Natural killer cell (primary cell): ENCODE measurements at regions of chr16 and their contacts with region 1.

Region 1: GRCh38 chr16:75234856-75235696 is 16.3 kb downstream of the CTRB1 start:
- DNase-seq: no peak
- ATAC-seq: no peak
- H3K4me3 ChIP-seq: no peak overlapping the region
- H3K4me3 Mint-ChIP-seq: no peak overlapping the region
- H3K27ac ChIP-seq: no peak overlapping the region
- H3K27ac Mint-ChIP-seq: no peak overlapping the region
- H3K4me1 ChIP-seq: peaks cover 15% of the 10 kb centered on the region
- H3K4me1 Mint-ChIP-seq: peaks cover 0 to 18% of the 10 kb centered on the region in 2 donors
- H3K27me3 ChIP-seq: peaks cover 8% of the 10 kb centered on the region
- H3K27me3 Mint-ChIP-seq: peaks cover 3 to 16% of the 10 kb centered on the region in 2 donors
- CTCF ChIP-seq: no peak

Region 2: DNA sequence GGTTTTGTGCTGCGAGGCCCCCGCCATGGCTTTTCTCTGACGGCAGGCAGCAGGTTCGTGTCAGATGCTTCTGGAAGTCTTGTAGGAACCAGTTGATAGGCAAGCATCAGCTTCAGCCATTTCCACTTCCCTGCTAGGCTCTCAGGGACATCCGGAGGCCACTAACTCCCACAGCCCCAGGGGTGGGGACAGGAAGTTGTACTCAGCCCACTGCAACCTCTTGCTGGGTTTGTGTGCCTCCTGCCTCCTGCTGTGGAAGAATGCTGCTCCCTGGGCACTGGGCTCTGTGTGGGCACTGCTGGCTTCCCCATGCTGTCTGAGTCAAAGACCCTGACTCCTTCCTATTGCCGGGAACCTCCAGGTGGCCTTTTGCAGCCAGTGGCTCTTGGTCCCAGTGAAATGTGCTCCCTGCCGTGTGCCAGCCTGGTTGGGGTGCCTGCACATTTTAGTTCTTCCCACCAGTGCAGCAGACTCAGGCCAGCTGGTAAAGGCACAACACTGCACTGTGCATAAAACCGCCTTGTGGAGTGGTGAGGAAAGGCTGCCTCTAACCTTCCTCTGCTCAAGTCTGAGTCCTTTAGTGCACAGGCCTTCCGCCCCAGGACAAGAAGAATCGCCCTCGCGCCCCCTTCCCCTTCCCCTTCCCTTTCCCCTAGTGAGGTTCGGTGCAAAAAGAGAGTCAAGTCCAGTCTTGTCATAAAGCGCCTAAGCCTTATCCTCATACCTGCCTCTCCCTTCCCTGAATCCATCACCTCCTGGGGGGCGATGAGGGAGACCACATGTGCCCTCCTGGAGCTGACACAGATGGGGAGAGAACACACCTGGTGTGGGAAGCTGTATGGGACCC is 135.1 kb before region 1 on chr16:
- intact Hi-C with region 1: no loop called
- DNase-seq: peak in 1 of 2 donors; percentile 59
- ATAC-seq: peak; percentile 41 to 68 (median 58)
- H3K4me3 ChIP-seq: no peak overlapping the region
- H3K4me3 Mint-ChIP-seq: no peak overlapping the region
- H3K27ac ChIP-seq: no peak overlapping the region
- H3K27ac Mint-ChIP-seq: peak overlapping the region in 1 of 2 donors; percentile 31
- H3K4me1 ChIP-seq: peaks cover 34% of the 10 kb centered on the region
- H3K4me1 Mint-ChIP-seq: peaks cover 12 to 20% of the 10 kb centered on the region in 2 donors
- H3K27me3 ChIP-seq: no peaks in the 10 kb centered on the region
- H3K27me3 Mint-ChIP-seq: peaks cover 5 to 14% of the 10 kb centered on the region in 2 donors
- CTCF ChIP-seq: no peak

Region 3: DNA sequence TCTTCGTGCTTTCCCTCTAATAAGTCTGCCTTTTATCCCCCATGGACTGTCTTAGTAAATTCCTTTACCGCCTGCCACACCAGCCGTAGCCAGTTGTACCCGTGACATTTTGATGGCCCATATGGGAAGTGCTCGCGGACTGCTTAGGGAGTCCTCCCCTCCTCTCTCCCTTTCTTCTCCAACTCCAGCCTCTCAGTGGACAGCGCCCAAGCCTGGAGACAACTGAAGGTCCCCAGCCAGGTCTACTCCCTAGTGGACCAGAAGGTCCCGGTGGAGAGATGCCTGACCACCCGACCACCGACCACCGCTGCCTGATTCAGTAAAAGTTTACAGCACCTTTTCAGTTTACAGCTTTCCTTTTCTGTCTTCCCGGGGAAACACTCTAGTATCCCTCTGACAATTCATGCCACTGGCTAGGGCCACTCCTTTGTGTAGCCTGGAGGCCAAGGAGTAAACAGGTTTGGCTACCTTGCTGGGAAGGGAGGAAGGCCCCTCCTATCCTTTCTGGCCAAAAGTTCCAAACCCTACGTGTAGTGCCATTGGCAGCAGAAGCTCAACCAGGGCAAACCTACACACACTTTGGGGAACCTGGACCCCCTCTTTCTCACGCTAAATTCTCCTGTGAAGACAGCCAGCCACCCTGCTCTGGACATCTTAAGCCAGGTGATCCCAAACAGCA is 46.1 kb before region 1 on chr16:
- intact Hi-C with region 1: no loop called
- DNase-seq: no peak
- ATAC-seq: no peak
- H3K4me3 ChIP-seq: no peak overlapping the region
- H3K4me3 Mint-ChIP-seq: no peak overlapping the region
- H3K27ac ChIP-seq: no peak overlapping the region
- H3K27ac Mint-ChIP-seq: no peak overlapping the region
- H3K4me1 ChIP-seq: no peaks in the 10 kb centered on the region
- H3K4me1 Mint-ChIP-seq: no peaks in the 10 kb centered on the region
- H3K27me3 ChIP-seq: no peaks in the 10 kb centered on the region
- H3K27me3 Mint-ChIP-seq: peaks cover 11 to 25% of the 10 kb centered on the region in 2 donors
- CTCF ChIP-seq: no peak

Region 4: DNA sequence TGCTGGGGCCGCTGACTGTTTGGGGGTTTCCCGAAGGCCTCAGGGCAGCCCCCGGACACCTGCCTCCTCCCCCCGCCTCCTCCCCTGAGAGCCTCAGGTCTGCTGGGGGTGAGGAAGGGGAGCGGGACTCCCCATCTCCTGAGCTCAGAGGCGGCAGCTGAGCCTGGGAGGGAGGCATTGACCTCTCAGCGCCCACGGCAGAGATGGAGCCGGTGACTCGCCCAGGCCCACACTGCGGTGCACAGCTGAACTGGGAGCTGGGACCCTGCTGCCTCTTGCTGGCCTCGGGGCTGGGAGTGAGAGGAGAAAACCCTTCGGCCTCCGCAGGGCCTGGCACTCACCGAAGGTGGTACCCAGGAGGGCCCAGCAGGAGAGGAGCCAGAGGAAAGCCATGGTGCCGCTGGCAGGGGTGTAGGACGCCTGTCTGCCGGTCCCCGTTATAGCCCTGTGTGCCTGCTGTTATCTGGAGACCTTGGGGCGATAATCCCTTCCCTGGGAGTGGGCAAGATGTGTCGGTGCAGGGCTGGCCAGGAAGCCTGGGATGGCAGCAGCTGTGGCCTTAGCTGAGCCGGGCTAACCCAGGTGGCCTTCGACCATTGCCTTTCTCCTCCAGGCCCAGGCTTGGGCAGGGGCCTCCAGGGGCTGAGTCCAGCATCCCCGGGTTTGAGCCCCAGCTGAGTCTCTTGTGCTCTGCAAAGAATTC is 28.2 kb before region 1 on chr16 and contains the start of gene CTRB2:
- intact Hi-C with region 1: no loop called
- DNase-seq: no peak
- ATAC-seq: no peak
- H3K4me3 ChIP-seq: no peak within 1 kb of the TSS
- H3K4me3 Mint-ChIP-seq: no peak within 1 kb of the TSS
- H3K27ac ChIP-seq: no peak within 1 kb of the TSS
- H3K27ac Mint-ChIP-seq: no peak within 1 kb of the TSS
- H3K4me1 ChIP-seq: no peaks in the 10 kb centered on the region
- H3K4me1 Mint-ChIP-seq: no peaks in the 10 kb centered on the region
- H3K27me3 ChIP-seq: no peaks in the 10 kb centered on the region
- H3K27me3 Mint-ChIP-seq: peaks cover 2 to 6% of the 10 kb centered on the region in 2 donors
- CTCF ChIP-seq: no peak
- total RNA-seq, gene CTRB2: not detected

Region 5: GRCh38 chr16:75251280-75252048 is 16.4 kb after region 1 on chr16 and contains the start of gene BCAR1:
- intact Hi-C with region 1: no loop called
- DNase-seq: no peak
- ATAC-seq: peak in 1 of 3 donors; percentile 56
- H3K4me3 ChIP-seq: no peak within 1 kb of the TSS
- H3K4me3 Mint-ChIP-seq: peak within 1 kb of the TSS; percentile 58
- H3K27ac ChIP-seq: no peak within 1 kb of the TSS
- H3K27ac Mint-ChIP-seq: no peak within 1 kb of the TSS
- H3K4me1 ChIP-seq: peaks cover 14% of the 10 kb centered on the region
- H3K4me1 Mint-ChIP-seq: peaks cover 0 to 17% of the 10 kb centered on the region in 2 donors
- H3K27me3 ChIP-seq: peaks cover 27% of the 10 kb centered on the region
- H3K27me3 Mint-ChIP-seq: peaks cover 50 to 57% of the 10 kb centered on the region in 2 donors
- CTCF ChIP-seq: no peak
- total RNA-seq, gene BCAR1: not detected

Region 6: DNA sequence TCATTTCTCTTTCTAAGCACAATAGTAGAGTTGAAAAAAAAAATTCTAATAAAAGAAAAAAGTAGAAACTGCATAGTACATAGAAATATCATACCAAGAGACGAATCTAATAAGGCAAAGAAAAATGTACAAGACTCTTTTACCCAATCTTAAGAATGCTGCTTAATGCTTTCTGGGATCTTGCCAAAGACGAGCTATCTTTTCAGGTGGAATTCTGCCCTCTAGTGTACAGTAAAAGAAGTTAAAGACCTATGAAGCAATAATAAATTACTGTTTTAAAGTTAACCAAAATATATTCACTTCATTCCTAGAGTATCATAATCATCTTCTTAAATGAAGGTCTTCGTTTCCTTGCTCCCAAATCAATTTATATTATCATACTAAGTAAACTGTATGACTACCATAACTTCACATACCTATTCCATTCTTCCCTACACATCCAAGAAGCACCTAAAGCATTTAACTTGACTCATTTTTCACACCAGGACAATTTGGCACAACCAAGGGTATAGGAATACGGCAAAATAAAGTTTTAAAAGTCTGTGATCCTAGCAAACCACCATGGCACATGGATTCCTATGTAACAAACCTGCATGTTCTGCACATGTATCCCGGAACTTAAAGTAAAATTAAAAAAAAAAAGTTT is 150.6 kb after region 1 on chr16:
- intact Hi-C with region 1: loop called (anchors 1 kb)
- DNase-seq: peak in 1 of 2 donors; percentile 84
- ATAC-seq: peak in 2 of 3 donors; percentile 52 to 53
- H3K4me3 ChIP-seq: no peak overlapping the region
- H3K4me3 Mint-ChIP-seq: no peak overlapping the region
- H3K27ac ChIP-seq: no peak overlapping the region
- H3K27ac Mint-ChIP-seq: no peak overlapping the region
- H3K4me1 ChIP-seq: no peaks in the 10 kb centered on the region
- H3K4me1 Mint-ChIP-seq: peaks cover 9 to 16% of the 10 kb centered on the region in 2 donors
- H3K27me3 ChIP-seq: no peaks in the 10 kb centered on the region
- H3K27me3 Mint-ChIP-seq: peaks cover 0 to 8% of the 10 kb centered on the region in 2 donors
- CTCF ChIP-seq: peak; percentile 88

Region 7: DNA sequence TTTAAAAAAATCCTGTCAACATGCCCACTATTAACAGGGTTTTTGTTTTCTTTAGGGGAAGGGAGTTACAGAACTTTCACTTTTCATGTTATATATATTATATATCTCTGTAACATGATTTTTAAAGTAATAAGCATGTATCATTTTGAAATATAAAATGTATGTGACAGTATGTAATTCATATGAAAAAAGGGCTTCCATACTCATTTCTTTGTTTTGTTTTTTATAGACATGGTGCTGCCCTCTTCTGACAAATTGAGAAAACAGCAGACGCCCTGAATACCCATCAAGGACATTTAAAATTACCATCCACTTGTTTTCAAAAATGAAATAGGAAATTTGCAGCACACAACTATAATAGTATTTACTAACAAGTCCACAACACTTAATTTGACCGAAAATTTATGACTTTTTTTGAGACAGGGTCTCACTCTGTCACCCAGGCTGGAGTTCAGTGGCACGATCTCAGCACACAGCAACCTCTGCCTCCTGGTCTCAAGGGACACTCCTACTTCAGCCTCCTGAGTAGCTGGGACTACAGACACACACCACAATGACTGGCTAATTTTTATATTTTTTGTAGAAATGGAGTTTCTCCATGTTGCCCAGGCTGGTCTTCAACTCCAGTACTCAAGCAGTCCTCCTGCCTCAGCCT is 167.9 kb after region 1 on chr16:
- intact Hi-C with region 1: loop called (anchors 5 kb)
- DNase-seq: peak in 1 of 2 donors; percentile 59
- ATAC-seq: peak; percentile 40 to 52 (median 48)
- H3K4me3 ChIP-seq: no peak overlapping the region
- H3K4me3 Mint-ChIP-seq: no peak overlapping the region
- H3K27ac ChIP-seq: no peak overlapping the region
- H3K27ac Mint-ChIP-seq: no peak overlapping the region
- H3K4me1 ChIP-seq: no peaks in the 10 kb centered on the region
- H3K4me1 Mint-ChIP-seq: peaks cover 0 to 7% of the 10 kb centered on the region in 2 donors
- H3K27me3 ChIP-seq: no peaks in the 10 kb centered on the region
- H3K27me3 Mint-ChIP-seq: no peaks in the 10 kb centered on the region
- CTCF ChIP-seq: peak; percentile 64